Common myeloid progenitor, CD34-positive (primary cell): ENCODE measurements at regions of chr11 and their contacts with region 1.

Region 1: DNA sequence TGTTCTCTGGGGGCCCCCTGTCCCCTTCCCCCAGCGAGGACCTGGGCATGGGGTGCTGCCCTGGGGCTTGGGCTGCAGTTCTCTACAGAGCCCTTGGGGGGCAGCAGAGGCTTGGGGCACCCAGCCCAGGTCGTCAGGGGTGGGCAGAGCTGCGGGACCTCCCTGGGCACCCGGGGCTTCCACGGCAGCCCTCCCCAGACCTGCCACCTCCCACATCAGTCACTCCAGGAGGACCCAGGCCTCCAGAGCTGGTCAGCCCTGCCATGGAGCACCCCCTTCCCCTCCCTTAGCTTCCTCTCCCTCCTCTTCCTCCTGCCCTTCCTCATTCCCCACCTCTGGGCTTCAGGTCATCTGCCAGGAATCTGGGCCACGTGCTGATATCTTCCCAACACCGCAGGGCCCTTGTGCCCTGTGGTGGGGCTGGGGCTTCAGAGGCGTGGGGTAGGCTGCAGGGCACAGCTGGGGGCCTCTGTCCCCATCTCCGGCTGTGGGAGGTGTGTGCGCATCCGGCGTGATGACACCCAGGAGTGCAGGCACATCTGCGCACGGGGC is 5.8 kb downstream of the TSPAN4 start:
- DNase-seq: peak; percentile 36 to 63 (median 57)
- H3K4me3 ChIP-seq: peak overlapping the region in 1 of 7 experiments; percentile 10
- H3K27ac ChIP-seq: no peak overlapping the region
- H3K4me1 ChIP-seq: peaks cover 0 to 52% (median 49%) of the 10 kb centered on the region in 4 experiments
- H3K27me3 ChIP-seq: peaks cover 0 to 7% (median 0%) of the 10 kb centered on the region in 5 experiments

Region 2: GRCh38 chr11:907668-908067 is 59.2 kb after region 1 on chr11:
- CTCF ChIA-PET with region 1: interaction called, 3 read pairs
- POLR2A ChIA-PET with region 1: interaction called, 10 read pairs
- DNase-seq: no peak
- H3K4me3 ChIP-seq: no peak overlapping the region
- H3K27ac ChIP-seq: no peak overlapping the region
- H3K4me1 ChIP-seq: peaks cover 0 to 23% (median 19%) of the 10 kb centered on the region in 4 experiments
- H3K27me3 ChIP-seq: no peaks in the 10 kb centered on the region

Region 3: GRCh38 chr11:975827-976226 is 127.4 kb after region 1 on chr11:
- CTCF ChIA-PET with region 1: interaction called, 29 read pairs
- POLR2A ChIA-PET with region 1: interaction called, 3 read pairs
- DNase-seq: peak; percentile 61 to 81 (median 78)
- H3K4me3 ChIP-seq: no peak overlapping the region
- H3K27ac ChIP-seq: no peak overlapping the region
- H3K4me1 ChIP-seq: peaks cover 0 to 28% (median 19%) of the 10 kb centered on the region in 4 experiments
- H3K27me3 ChIP-seq: no peaks in the 10 kb centered on the region

Region 4: GRCh38 chr11:1050581-1051355 is 202.3 kb after region 1 on chr11:
- CTCF ChIA-PET with region 1: interaction called, 32 read pairs
- POLR2A ChIA-PET with region 1: no interaction called
- DNase-seq: peak; percentile 58 to 76 (median 74)
- H3K4me3 ChIP-seq: no peak overlapping the region
- H3K27ac ChIP-seq: no peak overlapping the region
- H3K4me1 ChIP-seq: peaks cover 0 to 28% (median 13%) of the 10 kb centered on the region in 4 experiments
- H3K27me3 ChIP-seq: peaks cover 0 to 7% (median 5%) of the 10 kb centered on the region in 5 experiments